ENCODE measurements at regions of chr1 and their contacts with region 1.

Region 1: GRCh38 chr1:165597883-165598675 is 33.0 kb upstream of the MGST3 start:
- DNase-seq: peak; percentile 93
- H3K4me3 ChIP-seq: peak overlapping the region; percentile 68 to 80
- H3K27ac ChIP-seq: peak overlapping the region; percentile 84 to 85
- H3K4me1 ChIP-seq: peaks cover 5% of the 10 kb centered on the region in 2 experiments; a peak in 3 of 4 replicates
- H3K27me3 ChIP-seq: 0 out of 2 replicates have a peak, but pooled peaks cover 7% of the 10 kb centered on the region
- CTCF ChIP-seq: no peak
- EP300 ChIP-seq: peak in 1 of 2 experiments; percentile 12; a peak in 1 of 4 replicates
- RAD21 ChIP-seq: no peak

Region 2: DNA sequence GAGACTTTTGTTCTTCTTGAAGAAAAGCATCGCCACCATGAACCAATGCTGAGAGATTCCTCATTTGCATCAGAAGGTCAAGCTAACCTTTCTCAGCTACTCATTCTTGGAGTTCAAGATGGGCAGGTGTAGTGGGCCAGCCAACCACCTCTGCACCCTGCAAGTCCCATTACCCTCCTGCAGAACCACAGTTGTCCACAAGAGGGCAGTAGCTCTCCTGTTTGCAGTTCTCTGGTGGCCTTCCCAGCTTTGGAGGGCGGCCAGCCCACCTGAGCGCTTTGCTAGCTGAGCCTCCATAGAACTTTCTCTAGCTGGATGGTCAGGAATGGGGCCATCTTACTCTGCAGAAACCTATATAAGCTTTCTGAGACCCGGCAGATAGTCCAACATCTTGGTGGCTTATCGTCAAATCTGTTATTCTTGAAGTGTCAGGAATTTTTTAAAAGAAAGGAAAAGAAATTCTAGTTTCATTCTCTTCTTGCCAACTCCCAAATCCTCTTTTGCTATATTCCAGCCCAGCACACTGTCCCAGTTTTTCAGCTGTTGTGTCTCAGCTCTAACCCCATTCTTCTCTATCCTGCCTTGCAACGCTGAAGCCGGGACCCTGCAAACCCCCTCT is 230.6 kb before region 1 on chr1:
- CTCF ChIA-PET with region 1: interaction called, 41 read pairs
- POLR2A ChIA-PET with region 1: no interaction called
- DNase-seq: peak; percentile 81
- H3K4me3 ChIP-seq: no peak overlapping the region; a peak in 1 of 4 replicates
- H3K27ac ChIP-seq: no peak overlapping the region
- H3K4me1 ChIP-seq: no peaks in the 10 kb centered on the region
- H3K27me3 ChIP-seq: no peaks in the 10 kb centered on the region
- CTCF ChIP-seq: peak; percentile 94
- EP300 ChIP-seq: no peak
- RAD21 ChIP-seq: peak; percentile 44

Region 3: GRCh38 chr1:165392634-165393571 is 205.2 kb before region 1 on chr1:
- CTCF ChIA-PET with region 1: interaction called, 277 read pairs
- POLR2A ChIA-PET with region 1: no interaction called
- DNase-seq: peak; percentile 78
- H3K4me3 ChIP-seq: peak overlapping the region in 1 of 2 experiments; percentile 45; a peak in 1 of 4 replicates
- H3K27ac ChIP-seq: no peak overlapping the region
- H3K4me1 ChIP-seq: peaks cover 0 to 2% of the 10 kb centered on the region in 2 experiments; a peak in 1 of 4 replicates
- H3K27me3 ChIP-seq: peaks cover 14% of the 10 kb centered on the region
- CTCF ChIP-seq: peak; percentile 97
- EP300 ChIP-seq: no peak
- RAD21 ChIP-seq: peak; percentile 82

Region 4: DNA sequence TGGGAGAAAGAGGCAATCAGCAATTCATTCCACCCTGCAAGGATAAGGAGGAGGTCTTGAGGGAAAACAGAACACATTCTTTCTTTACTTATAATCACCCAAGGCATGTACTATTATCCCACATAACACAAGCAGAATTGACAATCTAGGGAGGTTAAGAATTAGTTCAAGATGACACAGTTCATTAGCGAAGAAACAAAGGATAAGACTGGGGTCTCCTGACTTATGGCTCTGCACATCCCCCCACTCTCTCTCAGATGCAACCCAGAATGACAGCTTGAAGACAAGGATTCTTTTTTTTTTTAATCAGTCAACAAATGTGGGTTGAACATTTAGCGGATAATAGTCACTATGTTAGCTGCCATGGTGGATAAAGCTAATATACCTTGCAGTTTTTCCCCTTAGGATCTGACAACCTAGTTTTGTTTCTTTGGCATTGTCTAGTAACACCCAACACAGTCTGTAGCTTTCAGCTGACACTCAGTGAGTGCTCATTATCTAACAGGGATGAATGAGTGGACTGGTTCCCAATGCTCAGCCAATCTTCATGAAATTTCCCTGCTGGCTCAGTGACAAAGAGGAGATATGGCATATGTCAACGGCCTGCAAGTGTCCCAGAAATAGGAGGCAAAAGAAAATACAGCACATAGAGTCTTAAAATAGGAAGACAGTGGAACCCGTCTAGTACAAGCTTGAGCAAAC is 188.3 kb before region 1 on chr1:
- CTCF ChIA-PET with region 1: interaction called, 52 read pairs
- POLR2A ChIA-PET with region 1: no interaction called
- DNase-seq: no peak
- H3K4me3 ChIP-seq: no peak overlapping the region
- H3K27ac ChIP-seq: no peak overlapping the region
- H3K4me1 ChIP-seq: no peaks in the 10 kb centered on the region
- H3K27me3 ChIP-seq: peaks cover 11% of the 10 kb centered on the region; the same call in 1 of the 2 replicates
- CTCF ChIP-seq: no peak
- EP300 ChIP-seq: no peak
- RAD21 ChIP-seq: no peak

Region 5: DNA sequence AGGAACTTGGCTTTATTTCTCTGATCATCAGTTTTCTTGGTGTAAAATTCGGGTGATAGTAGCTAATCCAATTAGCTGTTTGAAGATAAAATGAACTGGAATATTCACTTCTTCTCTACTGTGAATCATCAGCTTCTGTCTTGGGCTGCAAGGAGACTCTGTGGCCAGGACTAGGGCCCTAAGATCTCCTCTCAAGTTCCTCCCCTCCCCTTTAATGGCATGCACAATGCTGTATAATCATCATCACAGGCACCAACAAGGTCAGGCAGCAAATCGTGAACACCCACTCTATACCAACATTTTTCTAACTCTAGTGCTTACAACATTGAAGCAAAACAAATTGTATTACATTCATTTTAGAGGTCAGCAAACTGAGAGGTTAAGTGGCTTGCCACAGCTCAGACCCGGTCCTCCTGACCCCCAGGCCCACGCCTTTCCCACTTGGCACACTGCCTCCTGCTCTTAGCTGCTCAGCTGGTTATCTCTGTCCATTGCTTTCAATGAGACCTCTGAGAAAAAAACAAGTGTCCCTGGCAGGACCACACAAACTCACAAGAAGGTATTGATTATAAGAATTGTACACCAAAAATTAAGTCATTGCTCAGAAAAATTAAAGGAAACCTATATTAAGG is 22.5 kb before region 1 on chr1:
- CTCF ChIA-PET with region 1: interaction called, 29 read pairs
- POLR2A ChIA-PET with region 1: no interaction called
- DNase-seq: no peak
- H3K4me3 ChIP-seq: no peak overlapping the region
- H3K27ac ChIP-seq: no peak overlapping the region
- H3K4me1 ChIP-seq: no peaks in the 10 kb centered on the region
- H3K27me3 ChIP-seq: no peaks in the 10 kb centered on the region; the same call in 1 of the 2 replicates
- CTCF ChIP-seq: no peak
- EP300 ChIP-seq: no peak
- RAD21 ChIP-seq: no peak

Region 6: GRCh38 chr1:165645654-165646366 is 47.7 kb after region 1 on chr1:
- CTCF ChIA-PET with region 1: no interaction called
- POLR2A ChIA-PET with region 1: no interaction called
- DNase-seq: no peak
- H3K4me3 ChIP-seq: no peak overlapping the region
- H3K27ac ChIP-seq: no peak overlapping the region
- H3K4me1 ChIP-seq: peaks cover 6 to 15% of the 10 kb centered on the region in 2 experiments; a peak in 2 of 4 replicates
- H3K27me3 ChIP-seq: no peaks in the 10 kb centered on the region
- CTCF ChIP-seq: no peak
- EP300 ChIP-seq: no peak
- RAD21 ChIP-seq: no peak

Region 7: DNA sequence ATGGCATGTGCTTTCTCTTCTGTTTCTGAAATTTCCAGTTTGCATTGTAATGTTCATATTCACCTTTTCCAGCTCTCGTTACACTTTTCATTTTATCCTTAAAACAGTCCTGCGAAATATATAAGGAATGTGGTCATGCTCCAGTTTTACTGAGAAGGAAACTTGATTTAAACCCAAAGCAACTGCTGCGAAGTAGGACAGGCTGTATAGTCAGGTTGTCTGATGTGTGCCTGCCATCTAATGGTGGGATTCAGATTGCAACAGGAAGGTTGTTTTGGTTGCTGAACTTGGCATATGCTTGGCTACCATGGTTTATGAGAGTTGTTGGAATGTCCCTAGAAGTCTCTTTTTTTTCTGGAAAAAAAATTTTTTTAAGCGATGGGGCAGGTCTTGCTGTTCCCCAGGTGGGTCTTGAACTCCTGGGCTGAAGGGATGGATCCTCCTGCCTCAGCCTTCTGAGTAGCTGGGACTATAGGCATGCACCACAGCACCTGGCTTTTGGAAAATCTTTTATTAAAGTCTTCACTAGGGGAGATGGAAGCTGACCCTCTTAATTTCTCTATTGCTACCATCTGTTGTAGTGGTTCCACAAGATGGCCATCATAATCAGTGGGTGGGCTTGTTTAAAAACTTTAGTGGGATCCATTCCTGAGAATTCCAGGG is 316.2 kb after region 1 on chr1:
- CTCF ChIA-PET with region 1: interaction called, 55 read pairs
- POLR2A ChIA-PET with region 1: no interaction called
- DNase-seq: peak; percentile 70
- H3K4me3 ChIP-seq: no peak overlapping the region; a peak in 1 of 4 replicates
- H3K27ac ChIP-seq: no peak overlapping the region
- H3K4me1 ChIP-seq: no peaks in the 10 kb centered on the region
- H3K27me3 ChIP-seq: no peaks in the 10 kb centered on the region
- CTCF ChIP-seq: peak; percentile 97
- EP300 ChIP-seq: no peak
- RAD21 ChIP-seq: peak; percentile 99

Measured in SK-N-SH (cell line).